Naive thymus-derived CD4-positive, alpha-beta T cell (primary cell): ENCODE measurements at regions of chr6 and their contacts with region 1.

Region 1: GRCh38 chr6:45714741-45715507 is 300.7 kb downstream of the CLIC5 start:
- DNase-seq: peak in 7 of 9 donors; percentile 51 to 74 (median 68)
- ATAC-seq: peak; percentile 84
- H3K4me3 ChIP-seq: no peak overlapping the region
- H3K4me3 Mint-ChIP-seq: peak overlapping the region in 5 of 10 donors; percentile 16 to 64 (median 47)
- H3K27ac ChIP-seq: no peak overlapping the region
- H3K27ac Mint-ChIP-seq: peak overlapping the region in 3 of 9 donors; percentile 32 to 75 (median 70)
- H3K4me1 ChIP-seq: no peaks in the 10 kb centered on the region
- H3K4me1 Mint-ChIP-seq: peaks cover 8 to 46% (median 12%) of the 10 kb centered on the region in 7 donors
- H3K27me3 ChIP-seq: no peaks in the 10 kb centered on the region
- H3K27me3 Mint-ChIP-seq: no peaks in the 10 kb centered on the region

Region 2: GRCh38 chr6:44630125-44631028 is 1084.5 kb before region 1 on chr6:
- CTCF ChIA-PET with region 1: interaction called, 4 read pairs
- POLR2A ChIA-PET with region 1: no interaction called
- intact Hi-C with region 1: loop called in 1 of 2 experiments (anchors 1 kb)
- DNase-seq: peak in 1 of 9 donors; percentile 40
- ATAC-seq: peak; percentile 47
- H3K4me3 ChIP-seq: no peak overlapping the region
- H3K4me3 Mint-ChIP-seq: peak overlapping the region in 1 of 10 donors; percentile 18
- H3K27ac ChIP-seq: no peak overlapping the region
- H3K27ac Mint-ChIP-seq: no peak overlapping the region
- H3K4me1 ChIP-seq: no peaks in the 10 kb centered on the region
- H3K4me1 Mint-ChIP-seq: peaks cover 7 to 23% (median 11%) of the 10 kb centered on the region in 7 donors
- H3K27me3 ChIP-seq: no peaks in the 10 kb centered on the region
- H3K27me3 Mint-ChIP-seq: peaks cover 0 to 13% (median 6%) of the 10 kb centered on the region in 5 donors

Region 3: DNA sequence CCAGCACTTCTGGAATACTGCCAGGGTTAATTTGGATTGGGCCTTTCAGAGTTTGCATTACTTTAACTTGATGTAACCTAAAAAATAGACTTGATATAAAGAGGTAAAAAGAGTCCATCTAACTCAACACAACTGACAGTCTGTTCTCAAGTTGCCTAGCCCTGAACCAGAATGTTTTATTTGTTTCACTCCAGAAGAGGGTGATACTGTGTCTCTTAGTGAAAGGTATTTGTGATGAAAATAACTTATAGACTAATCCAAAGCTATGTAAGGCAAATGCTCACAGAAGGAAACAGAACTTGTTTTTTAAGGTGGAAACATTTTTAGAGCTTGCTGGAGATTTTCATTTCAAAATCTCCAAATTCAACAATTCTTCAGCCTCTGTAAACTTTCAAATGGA is 855.9 kb before region 1 on chr6:
- CTCF ChIA-PET with region 1: no interaction called
- POLR2A ChIA-PET with region 1: no interaction called
- intact Hi-C with region 1: loop called in 1 of 2 experiments (anchors 1 kb)
- DNase-seq: peak in 5 of 9 donors; percentile 13 to 39 (median 15)
- ATAC-seq: peak; percentile 50
- H3K4me3 ChIP-seq: no peak overlapping the region
- H3K4me3 Mint-ChIP-seq: no peak overlapping the region
- H3K27ac ChIP-seq: no peak overlapping the region
- H3K27ac Mint-ChIP-seq: peak overlapping the region in 1 of 9 donors; percentile 4
- H3K4me1 ChIP-seq: peaks cover 0 to 13% of the 10 kb centered on the region in 2 donors
- H3K4me1 Mint-ChIP-seq: peaks cover 17 to 76% (median 60%) of the 10 kb centered on the region in 7 donors
- H3K27me3 ChIP-seq: no peaks in the 10 kb centered on the region
- H3K27me3 Mint-ChIP-seq: no peaks in the 10 kb centered on the region

Region 4: DNA sequence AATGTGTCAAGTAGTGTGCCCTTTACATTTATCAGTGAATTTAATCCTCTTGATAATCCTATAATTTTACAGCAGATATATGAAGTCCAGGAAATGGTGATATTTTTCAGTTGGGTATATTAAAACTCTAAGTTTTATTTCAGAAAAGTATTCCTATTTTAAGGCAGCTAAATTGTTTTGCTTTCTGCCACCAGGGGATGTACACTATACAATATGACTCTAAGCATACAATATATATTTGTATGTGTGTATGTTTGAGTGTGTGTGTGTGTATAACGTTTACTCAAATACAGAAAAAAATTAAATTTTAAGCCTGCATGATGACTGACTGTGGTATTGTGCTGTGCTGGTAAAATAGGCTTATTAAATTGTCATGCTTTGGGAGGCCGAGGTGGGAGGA is 488.8 kb before region 1 on chr6:
- CTCF ChIA-PET with region 1: no interaction called
- POLR2A ChIA-PET with region 1: no interaction called
- intact Hi-C with region 1: loop called in 1 of 2 experiments (anchors 5 kb)
- DNase-seq: no peak
- ATAC-seq: no peak
- H3K4me3 ChIP-seq: no peak overlapping the region
- H3K4me3 Mint-ChIP-seq: no peak overlapping the region
- H3K27ac ChIP-seq: no peak overlapping the region
- H3K27ac Mint-ChIP-seq: no peak overlapping the region
- H3K4me1 ChIP-seq: no peaks in the 10 kb centered on the region
- H3K4me1 Mint-ChIP-seq: peaks cover 0 to 6% (median 3%) of the 10 kb centered on the region in 7 donors
- H3K27me3 ChIP-seq: no peaks in the 10 kb centered on the region
- H3K27me3 Mint-ChIP-seq: no peaks in the 10 kb centered on the region

Region 5: DNA sequence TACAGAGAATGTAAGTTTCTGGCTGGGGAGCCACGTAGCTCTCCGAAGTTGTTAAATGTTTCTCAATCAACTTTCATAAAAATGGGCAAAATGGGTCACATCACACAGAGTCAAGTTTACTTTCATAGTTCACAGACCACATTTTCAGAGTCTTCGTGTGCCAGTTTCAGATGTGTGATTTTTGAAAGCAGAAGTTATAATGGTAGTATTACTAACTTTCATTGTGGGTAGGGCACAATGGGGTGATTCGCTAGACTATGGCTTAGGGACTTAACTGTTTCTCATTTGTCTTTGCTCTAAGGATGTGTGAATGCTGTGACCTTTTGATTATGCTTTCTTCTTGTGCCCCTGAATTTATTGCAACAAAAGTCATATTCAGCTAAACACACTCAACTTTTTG is 228.2 kb before region 1 on chr6:
- CTCF ChIA-PET with region 1: interaction called, 4 read pairs
- POLR2A ChIA-PET with region 1: no interaction called
- intact Hi-C with region 1: loop called in 1 of 2 experiments (anchors 5 kb)
- DNase-seq: no peak
- ATAC-seq: peak; percentile 45
- H3K4me3 ChIP-seq: no peak overlapping the region
- H3K4me3 Mint-ChIP-seq: no peak overlapping the region
- H3K27ac ChIP-seq: no peak overlapping the region
- H3K27ac Mint-ChIP-seq: no peak overlapping the region
- H3K4me1 ChIP-seq: peaks cover 17 to 20% of the 10 kb centered on the region in 2 donors
- H3K4me1 Mint-ChIP-seq: peaks cover 21 to 38% (median 31%) of the 10 kb centered on the region in 7 donors
- H3K27me3 ChIP-seq: no peaks in the 10 kb centered on the region
- H3K27me3 Mint-ChIP-seq: peaks cover 0 to 4% (median 0%) of the 10 kb centered on the region in 5 donors

Region 6: DNA sequence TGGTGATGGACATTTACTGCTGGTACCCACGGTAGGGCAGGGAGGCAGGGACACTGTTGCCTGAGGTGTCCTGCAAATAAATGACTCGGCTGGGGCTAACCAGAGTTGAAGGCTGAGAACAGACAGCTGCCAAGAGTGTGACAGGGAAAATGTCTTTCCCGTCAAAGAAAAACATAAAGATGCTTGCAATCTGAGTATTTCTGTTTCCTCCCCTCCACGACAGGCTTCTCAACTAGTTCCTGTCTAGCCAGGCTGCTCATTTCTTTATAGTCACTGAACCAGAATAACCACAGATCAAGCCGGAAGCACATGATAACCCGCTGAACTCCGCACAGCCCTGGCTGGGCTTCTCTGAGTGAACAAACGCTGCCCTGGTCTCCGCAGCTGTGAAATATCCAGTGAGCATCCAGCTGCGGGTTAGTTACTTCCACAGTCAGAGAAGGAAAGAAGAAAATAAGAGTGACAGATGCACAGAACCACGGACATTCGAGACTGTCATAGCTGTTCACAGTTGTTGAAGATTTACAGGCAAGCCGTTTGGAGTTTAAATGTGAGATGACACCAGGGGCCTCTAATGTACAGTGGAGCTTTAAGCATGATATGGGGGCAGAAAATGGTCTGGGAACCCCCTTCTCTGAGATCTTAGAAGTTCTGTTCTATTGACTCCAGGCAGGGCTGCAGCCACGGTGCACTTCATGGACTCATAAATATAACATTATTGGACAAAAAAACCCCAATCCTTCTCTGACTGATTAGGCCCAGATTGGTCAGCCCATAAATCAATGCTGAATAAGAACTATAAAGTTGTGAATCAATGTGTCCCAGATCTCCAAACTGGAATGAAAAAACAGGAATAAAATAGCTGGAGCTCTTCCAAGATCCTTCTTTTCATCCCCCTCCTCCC is 37.3 kb before region 1 on chr6:
- CTCF ChIA-PET with region 1: interaction called, 6 read pairs
- POLR2A ChIA-PET with region 1: no interaction called
- intact Hi-C with region 1: loop called (anchors 1 to 2 kb)
- DNase-seq: peak in 8 of 9 donors; percentile 32 to 68 (median 53)
- ATAC-seq: peak; percentile 83
- H3K4me3 ChIP-seq: peak overlapping the region; percentile 3
- H3K4me3 Mint-ChIP-seq: peak overlapping the region; percentile 71 to 84 (median 77)
- H3K27ac ChIP-seq: peak overlapping the region; percentile 12
- H3K27ac Mint-ChIP-seq: peak overlapping the region; percentile 65 to 92 (median 83)
- H3K4me1 ChIP-seq: peaks cover 12 to 27% of the 10 kb centered on the region in 2 donors
- H3K4me1 Mint-ChIP-seq: peaks cover 17 to 54% (median 43%) of the 10 kb centered on the region in 7 donors
- H3K27me3 ChIP-seq: no peaks in the 10 kb centered on the region
- H3K27me3 Mint-ChIP-seq: no peaks in the 10 kb centered on the region

Region 7: DNA sequence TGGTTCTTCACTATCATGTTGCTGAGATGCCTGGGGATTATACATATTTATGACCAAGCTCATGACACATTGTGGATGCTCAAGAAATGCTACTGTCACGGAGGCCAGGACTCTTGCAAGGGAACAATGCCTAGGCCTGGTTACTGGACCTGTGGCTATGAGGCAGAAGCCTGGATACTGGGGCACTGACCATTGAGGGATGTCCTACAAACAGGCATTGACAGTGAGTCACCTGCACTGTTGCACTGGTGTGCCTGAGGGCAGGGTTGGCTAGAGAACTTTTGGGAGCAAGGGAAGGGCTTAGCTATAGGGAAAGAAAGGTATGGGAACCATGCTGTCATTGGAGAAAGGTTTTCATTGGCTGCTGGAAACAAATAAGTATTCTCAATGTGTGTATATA is 24.1 kb before region 1 on chr6:
- CTCF ChIA-PET with region 1: no interaction called
- POLR2A ChIA-PET with region 1: no interaction called
- intact Hi-C with region 1: no loop called
- DNase-seq: no peak
- ATAC-seq: no peak
- H3K4me3 ChIP-seq: no peak overlapping the region
- H3K4me3 Mint-ChIP-seq: no peak overlapping the region
- H3K27ac ChIP-seq: no peak overlapping the region
- H3K27ac Mint-ChIP-seq: no peak overlapping the region
- H3K4me1 ChIP-seq: no peaks in the 10 kb centered on the region
- H3K4me1 Mint-ChIP-seq: peaks cover 0 to 5% (median 0%) of the 10 kb centered on the region in 7 donors
- H3K27me3 ChIP-seq: no peaks in the 10 kb centered on the region
- H3K27me3 Mint-ChIP-seq: peaks cover 0 to 4% (median 0%) of the 10 kb centered on the region in 5 donors